CD4-positive, alpha-beta T cell (primary cell): ENCODE measurements at regions of chr20 and their contacts with region 1.

Region 1: GRCh38 chr20:59439243-59439642 is 138.8 kb downstream of the EDN3 start:
- DNase-seq: no peak
- ATAC-seq: no peak
- H3K4me3 ChIP-seq: no peak overlapping the region
- H3K4me3 Mint-ChIP-seq: no peak overlapping the region
- H3K27ac ChIP-seq: no peak overlapping the region
- H3K27ac Mint-ChIP-seq: no peak overlapping the region
- H3K4me1 ChIP-seq: no peaks in the 10 kb centered on the region
- H3K4me1 Mint-ChIP-seq: no peaks in the 10 kb centered on the region
- H3K27me3 ChIP-seq: peaks cover 3 to 6% of the 10 kb centered on the region in 2 experiments
- H3K27me3 Mint-ChIP-seq: peaks cover 25% of the 10 kb centered on the region
- CTCF ChIP-seq: no peak

Region 2: DNA sequence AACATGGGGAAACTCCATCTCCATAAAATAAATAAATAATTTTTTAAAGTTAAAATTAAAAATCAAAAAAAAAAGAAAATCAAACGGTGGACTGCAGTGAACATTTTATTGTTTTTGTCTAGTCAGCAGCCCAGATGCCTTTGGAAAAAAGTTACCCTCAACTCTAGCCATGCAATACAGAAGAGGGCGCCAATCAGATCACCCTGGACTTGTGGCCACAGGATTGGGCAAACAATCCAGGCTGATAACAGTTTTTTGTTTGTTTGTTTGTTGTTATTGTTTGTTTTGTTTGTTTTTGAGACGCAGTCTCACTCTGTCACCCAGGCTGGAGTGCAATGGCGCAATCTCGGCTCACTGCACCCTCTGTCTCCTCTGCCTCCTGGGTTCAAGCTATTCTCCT is 488.6 kb before region 1 on chr20:
- CTCF ChIA-PET with region 1: no interaction called
- POLR2A ChIA-PET with region 1: no interaction called
- intact Hi-C with region 1: loop called in 1 of 2 experiments (anchors 10 kb)
- DNase-seq: peak in 1 of 14 experiments; percentile 6
- ATAC-seq: no peak
- H3K4me3 ChIP-seq: no peak overlapping the region
- H3K4me3 Mint-ChIP-seq: no peak overlapping the region
- H3K27ac ChIP-seq: no peak overlapping the region
- H3K27ac Mint-ChIP-seq: no peak overlapping the region
- H3K4me1 ChIP-seq: no peaks in the 10 kb centered on the region
- H3K4me1 Mint-ChIP-seq: no peaks in the 10 kb centered on the region
- H3K27me3 ChIP-seq: peaks cover 0 to 5% of the 10 kb centered on the region in 2 experiments
- H3K27me3 Mint-ChIP-seq: peaks cover 3% of the 10 kb centered on the region
- CTCF ChIP-seq: no peak

Region 3: DNA sequence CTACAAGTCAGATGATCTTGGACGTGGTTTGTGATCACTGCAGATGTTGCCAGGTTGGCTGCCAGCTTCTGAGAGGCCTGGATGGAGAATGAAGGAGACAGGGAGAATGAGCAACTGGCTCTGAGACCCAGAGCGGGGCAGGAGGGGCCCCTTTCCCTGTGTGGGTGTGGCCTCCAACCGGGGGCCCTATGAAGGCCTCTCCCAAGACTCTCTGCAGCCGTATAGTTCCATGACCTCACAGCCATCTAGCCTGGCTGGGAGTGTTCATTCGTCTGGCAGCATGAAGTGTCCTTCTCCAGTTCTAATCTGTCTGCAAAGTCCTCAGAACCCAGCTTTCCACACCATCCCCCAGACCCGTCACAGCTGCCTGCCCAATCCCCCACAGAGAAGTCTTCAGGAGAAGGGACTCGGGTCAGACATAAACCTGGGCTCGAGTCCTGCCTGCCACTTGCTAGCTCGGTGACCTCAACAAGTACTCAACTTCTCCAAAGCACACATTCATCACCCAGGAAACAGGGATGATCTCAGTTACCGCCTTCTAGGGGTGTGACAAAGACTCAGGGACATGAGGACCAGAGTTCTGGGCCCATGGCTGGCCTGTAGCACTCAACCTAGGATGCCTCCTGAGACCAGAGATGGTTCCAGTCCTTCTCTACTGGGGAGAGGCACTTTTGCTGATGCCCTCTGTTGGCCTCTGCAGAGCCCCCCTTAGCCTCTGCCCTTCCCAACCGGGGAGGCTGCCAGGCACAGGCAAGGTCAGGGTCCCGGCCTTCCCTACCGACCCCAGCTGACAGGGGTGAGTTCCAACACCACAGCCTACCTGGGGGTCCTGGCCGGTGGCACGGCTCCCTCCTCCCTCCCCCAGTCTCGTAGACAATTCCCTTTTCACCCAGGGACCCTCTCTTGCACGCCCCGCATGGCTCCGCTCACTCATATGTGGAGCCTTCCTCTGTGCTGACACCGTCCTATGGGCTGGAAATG is 16.1 kb before region 1 on chr20:
- CTCF ChIA-PET with region 1: no interaction called
- POLR2A ChIA-PET with region 1: no interaction called
- intact Hi-C with region 1: no loop called
- DNase-seq: no peak
- ATAC-seq: no peak
- H3K4me3 ChIP-seq: no peak overlapping the region
- H3K4me3 Mint-ChIP-seq: no peak overlapping the region
- H3K27ac ChIP-seq: no peak overlapping the region
- H3K27ac Mint-ChIP-seq: no peak overlapping the region
- H3K4me1 ChIP-seq: no peaks in the 10 kb centered on the region
- H3K4me1 Mint-ChIP-seq: no peaks in the 10 kb centered on the region
- H3K27me3 ChIP-seq: no peaks in the 10 kb centered on the region
- H3K27me3 Mint-ChIP-seq: peaks cover 7% of the 10 kb centered on the region
- CTCF ChIP-seq: no peak

Region 4: DNA sequence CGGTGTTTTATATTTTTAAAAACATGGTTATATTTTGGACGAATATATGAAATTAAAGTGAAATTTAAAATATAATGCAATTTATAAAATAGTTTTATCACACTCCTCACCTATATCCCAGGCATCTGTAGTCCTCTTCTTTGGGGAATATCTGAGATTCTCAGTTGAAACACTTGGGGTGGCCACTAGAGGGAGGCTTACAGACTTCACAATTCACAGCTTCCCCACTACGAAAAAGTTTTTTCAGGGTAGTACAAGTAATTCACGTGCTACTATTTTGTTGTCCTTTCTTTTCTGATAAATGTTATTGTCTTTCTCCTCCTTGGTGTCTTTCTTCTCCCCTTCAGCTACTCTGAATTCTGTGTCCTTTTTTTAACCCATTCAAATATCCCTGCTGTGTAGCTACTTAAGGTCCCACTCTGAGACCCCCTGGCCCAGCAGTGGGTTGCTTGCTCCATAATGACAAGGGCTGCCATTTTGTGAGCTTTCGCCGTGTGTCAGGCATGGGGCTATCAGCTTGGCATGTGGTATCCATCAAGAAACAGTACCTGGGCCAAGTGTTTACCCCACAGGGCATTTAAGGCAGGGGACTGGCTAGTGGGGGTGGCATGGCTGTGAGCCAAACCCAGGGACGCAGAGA is 121.5 kb after region 1 on chr20:
- CTCF ChIA-PET with region 1: no interaction called
- POLR2A ChIA-PET with region 1: no interaction called
- intact Hi-C with region 1: no loop called
- DNase-seq: no peak
- ATAC-seq: no peak
- H3K4me3 ChIP-seq: no peak overlapping the region
- H3K4me3 Mint-ChIP-seq: no peak overlapping the region
- H3K27ac ChIP-seq: no peak overlapping the region
- H3K27ac Mint-ChIP-seq: no peak overlapping the region
- H3K4me1 ChIP-seq: no peaks in the 10 kb centered on the region
- H3K4me1 Mint-ChIP-seq: no peaks in the 10 kb centered on the region
- H3K27me3 ChIP-seq: no peaks in the 10 kb centered on the region
- H3K27me3 Mint-ChIP-seq: no peaks in the 10 kb centered on the region
- CTCF ChIP-seq: peak; percentile 58